MCF 10A (cell line): ENCODE measurements at regions of chr14 and their contacts with region 1.

Region 1: GRCh38 chr14:53055003-53055402 is 98.1 kb downstream of the DDHD1 start:
- DNase-seq: peak; percentile 65
- H3K4me3 Mint-ChIP-seq: no peak overlapping the region
- H3K27ac Mint-ChIP-seq: no peak overlapping the region
- H3K4me1 Mint-ChIP-seq: no peaks in the 10 kb centered on the region
- H3K27me3 Mint-ChIP-seq: no peaks in the 10 kb centered on the region
- CTCF ChIP-seq: peak; percentile 56

Region 2: GRCh38 chr14:52729925-52730667 is 324.9 kb before region 1 on chr14 and contains the start of gene STYX:
- CTCF ChIA-PET with region 1: no interaction called
- POLR2A ChIA-PET with region 1: no interaction called
- intact Hi-C with region 1: no loop called
- DNase-seq: peak; percentile 98
- H3K4me3 Mint-ChIP-seq: peak within 1 kb of the TSS; percentile 96
- H3K27ac Mint-ChIP-seq: peak within 1 kb of the TSS; percentile 93
- H3K4me1 Mint-ChIP-seq: no peaks in the 10 kb centered on the region
- H3K27me3 Mint-ChIP-seq: no peaks in the 10 kb centered on the region
- CTCF ChIP-seq: no peak
- total RNA-seq, gene STYX: 15.5 and 16.3 TPM in 2 replicates

Region 3: GRCh38 chr14:52824507-52824906 is 230.5 kb before region 1 on chr14:
- CTCF ChIA-PET with region 1: interaction called, 19 read pairs
- POLR2A ChIA-PET with region 1: no interaction called
- intact Hi-C with region 1: loop called (anchors 1 kb)
- DNase-seq: no peak
- H3K4me3 Mint-ChIP-seq: no peak overlapping the region
- H3K27ac Mint-ChIP-seq: no peak overlapping the region
- H3K4me1 Mint-ChIP-seq: no peaks in the 10 kb centered on the region
- H3K27me3 Mint-ChIP-seq: no peaks in the 10 kb centered on the region
- CTCF ChIP-seq: no peak

Region 4: GRCh38 chr14:52936437-52936836 is 118.6 kb before region 1 on chr14:
- CTCF ChIA-PET with region 1: no interaction called
- POLR2A ChIA-PET with region 1: no interaction called
- intact Hi-C with region 1: no loop called
- DNase-seq: no peak
- H3K4me3 Mint-ChIP-seq: no peak overlapping the region
- H3K27ac Mint-ChIP-seq: no peak overlapping the region
- H3K4me1 Mint-ChIP-seq: peaks cover 32% of the 10 kb centered on the region
- H3K27me3 Mint-ChIP-seq: no peaks in the 10 kb centered on the region
- CTCF ChIP-seq: no peak

Region 5: GRCh38 chr14:52961060-52961639 is 93.9 kb before region 1 on chr14:
- CTCF ChIA-PET with region 1: interaction called, 6 read pairs
- POLR2A ChIA-PET with region 1: no interaction called
- intact Hi-C with region 1: loop called (anchors 2 kb)
- DNase-seq: peak; percentile 75
- H3K4me3 Mint-ChIP-seq: no peak overlapping the region
- H3K27ac Mint-ChIP-seq: no peak overlapping the region
- H3K4me1 Mint-ChIP-seq: peaks cover 11% of the 10 kb centered on the region
- H3K27me3 Mint-ChIP-seq: no peaks in the 10 kb centered on the region
- CTCF ChIP-seq: peak; percentile 64

Region 6: GRCh38 chr14:52992236-52992870 is 62.6 kb before region 1 on chr14:
- CTCF ChIA-PET with region 1: no interaction called
- POLR2A ChIA-PET with region 1: no interaction called
- intact Hi-C with region 1: no loop called
- DNase-seq: no peak
- H3K4me3 Mint-ChIP-seq: no peak overlapping the region
- H3K27ac Mint-ChIP-seq: no peak overlapping the region
- H3K4me1 Mint-ChIP-seq: no peaks in the 10 kb centered on the region
- H3K27me3 Mint-ChIP-seq: no peaks in the 10 kb centered on the region
- CTCF ChIP-seq: no peak

Region 7: DNA sequence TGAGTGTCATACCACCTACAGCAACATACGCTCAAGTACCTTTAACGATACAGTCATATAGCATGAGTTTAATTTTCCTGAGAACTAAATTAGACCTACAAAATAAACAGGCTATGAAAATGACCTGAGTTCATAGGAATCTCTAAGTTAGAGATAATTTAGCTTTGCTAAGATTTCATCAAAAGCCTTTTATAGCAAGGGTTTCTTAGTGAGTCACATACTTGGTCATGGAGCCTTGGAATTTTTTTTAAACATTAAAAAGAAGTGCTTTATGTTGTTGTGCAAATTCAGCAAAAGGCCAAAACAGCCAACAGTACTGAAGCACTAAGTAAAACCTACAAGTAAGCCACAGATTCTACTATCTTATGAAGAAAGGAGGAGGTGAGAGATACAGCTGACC is 10.5 kb before region 1 on chr14:
- CTCF ChIA-PET with region 1: interaction called, 22 read pairs
- POLR2A ChIA-PET with region 1: interaction called, 4 read pairs
- intact Hi-C with region 1: no loop called
- DNase-seq: no peak
- H3K4me3 Mint-ChIP-seq: no peak overlapping the region
- H3K27ac Mint-ChIP-seq: no peak overlapping the region
- H3K4me1 Mint-ChIP-seq: no peaks in the 10 kb centered on the region
- H3K27me3 Mint-ChIP-seq: no peaks in the 10 kb centered on the region
- CTCF ChIP-seq: no peak